ENCODE measurements at regions of chr17 and their contacts with region 1.

Region 1: DNA sequence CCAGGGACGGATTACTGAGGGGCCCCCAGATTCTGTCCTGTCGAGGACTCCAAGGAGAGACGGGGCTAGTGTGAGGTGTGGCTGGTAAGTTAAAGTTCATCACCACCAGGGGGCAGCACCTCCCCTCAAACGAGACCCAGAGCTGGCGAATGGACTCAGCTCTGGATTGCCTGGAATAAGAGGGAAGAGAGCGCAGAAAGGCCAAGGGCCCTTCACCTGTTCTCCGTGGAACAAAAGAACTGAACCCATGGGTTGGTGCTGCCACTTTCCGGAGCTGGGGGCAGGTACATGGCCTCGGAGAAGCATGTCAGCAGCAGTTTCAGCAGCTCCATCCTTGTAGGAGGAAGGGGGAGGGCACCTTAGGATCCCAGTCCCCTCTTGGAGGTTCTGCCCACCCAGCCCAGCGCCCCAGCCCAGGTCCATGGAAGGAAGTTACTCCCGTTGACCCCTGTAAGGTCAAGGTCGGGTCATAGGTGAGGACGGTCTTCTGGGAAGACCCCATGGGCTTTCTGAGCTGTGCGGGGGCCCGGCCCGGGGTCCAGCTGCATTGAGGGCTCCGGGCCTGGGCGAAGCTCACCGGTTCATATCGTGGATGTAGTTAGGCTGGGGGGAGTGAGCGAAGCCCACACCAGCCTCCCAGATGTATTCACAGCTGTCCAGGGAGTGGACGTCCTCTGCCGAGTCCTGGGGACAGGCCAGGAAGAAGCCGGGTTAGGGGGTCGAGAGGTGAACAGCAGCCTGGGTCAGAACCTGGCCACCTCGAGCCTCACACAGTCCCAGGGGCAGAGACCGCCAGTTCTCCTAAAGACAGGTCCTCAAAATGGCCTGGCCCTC is 10.7 kb downstream of the HID1 start:
- DNase-seq: no peak
- H3K4me3 ChIP-seq: no peak overlapping the region
- H3K27ac ChIP-seq: no peak overlapping the region
- H3K4me1 ChIP-seq: peaks cover 3 to 38% (median 9%) of the 10 kb centered on the region in 3 donors
- H3K27me3 ChIP-seq: peaks cover 0 to 8% (median 0%) of the 10 kb centered on the region in 4 donors
- CTCF ChIP-seq: peak; percentile 77 to 91 (median 86)
- POLR2A ChIP-seq: no peak

Region 2: GRCh38 chr17:74798239-74798707 is 163.6 kb before region 1 on chr17:
- intact Hi-C with region 1: loop called (anchors 10 kb)
- DNase-seq: no peak
- H3K4me3 ChIP-seq: no peak overlapping the region
- H3K27ac ChIP-seq: no peak overlapping the region
- H3K4me1 ChIP-seq: no peaks in the 10 kb centered on the region
- H3K27me3 ChIP-seq: no peaks in the 10 kb centered on the region
- CTCF ChIP-seq: no peak
- POLR2A ChIP-seq: no peak

Region 3: DNA sequence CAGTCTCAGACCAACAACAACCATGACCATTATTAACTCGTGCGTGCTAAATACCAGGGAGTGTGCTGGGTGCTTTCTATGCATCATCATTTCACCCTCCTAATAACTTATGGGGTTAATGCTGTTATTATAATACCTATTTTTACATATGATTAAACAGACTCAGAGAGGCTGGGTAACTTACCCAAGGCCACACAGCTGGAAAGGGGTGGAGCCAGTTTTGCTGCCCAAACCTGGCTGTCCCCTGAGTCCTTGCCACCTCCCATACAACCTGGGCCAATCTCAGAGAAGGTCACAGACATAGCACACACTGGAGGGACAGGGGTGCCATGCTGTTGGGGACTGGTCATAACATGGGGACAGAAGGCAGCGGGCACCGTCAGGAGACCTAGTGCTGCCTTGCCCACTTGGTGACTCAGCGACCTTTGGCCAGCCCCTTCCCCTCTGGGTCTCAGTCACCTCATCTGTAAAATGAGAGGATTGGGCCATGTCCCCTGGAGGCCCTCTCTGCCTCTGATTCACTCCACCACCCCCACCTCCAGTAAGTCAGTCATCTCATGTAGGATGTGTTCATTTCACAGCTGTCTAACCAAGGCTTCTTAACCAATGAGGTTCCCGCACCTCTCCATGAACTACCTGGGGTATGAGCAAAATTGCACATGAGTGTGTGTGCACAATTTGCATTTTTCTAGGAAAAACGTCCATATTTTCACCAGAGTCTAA is 57.0 kb before region 1 on chr17:
- intact Hi-C with region 1: no loop called
- DNase-seq: no peak
- H3K4me3 ChIP-seq: no peak overlapping the region
- H3K27ac ChIP-seq: no peak overlapping the region
- H3K4me1 ChIP-seq: peaks cover 6 to 41% (median 15%) of the 10 kb centered on the region in 3 donors
- H3K27me3 ChIP-seq: peaks cover 0 to 44% (median 0%) of the 10 kb centered on the region in 4 donors
- CTCF ChIP-seq: no peak
- POLR2A ChIP-seq: no peak

Region 4: DNA sequence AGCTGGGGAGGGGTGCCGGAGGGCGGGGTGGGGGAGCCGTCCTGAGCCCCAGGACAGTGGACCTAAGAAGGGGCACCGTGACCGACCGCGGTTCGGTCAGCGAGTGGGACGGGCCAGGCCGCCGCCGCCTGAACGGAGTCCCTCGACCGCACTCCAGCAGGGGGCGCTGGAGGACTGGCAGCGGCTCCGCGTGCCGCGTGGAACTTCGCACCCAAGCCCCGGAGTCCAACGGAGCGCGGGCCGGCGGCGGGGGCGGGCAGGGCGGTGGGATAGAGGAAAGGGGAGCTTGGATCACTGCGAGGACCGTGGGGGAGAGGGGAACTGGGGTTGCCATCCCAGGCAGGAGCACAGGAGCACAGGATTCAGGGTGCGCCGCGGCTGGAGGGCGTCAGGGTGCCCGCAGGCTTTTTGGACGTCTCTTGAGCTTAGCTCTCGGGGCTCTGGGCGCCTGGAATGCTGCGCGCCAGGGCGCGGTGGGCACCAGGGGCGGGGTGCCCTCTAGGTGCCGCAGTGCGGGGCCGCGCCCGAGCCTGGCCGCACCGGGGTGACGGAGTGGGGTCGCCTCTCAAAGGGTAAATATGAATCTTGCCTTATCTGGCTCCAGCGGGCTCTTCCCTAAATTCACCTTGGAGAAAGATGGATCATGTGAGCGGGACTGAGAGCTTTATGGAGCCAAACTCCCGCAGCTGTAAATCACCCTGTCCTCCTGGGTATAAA is 38.2 kb before region 1 on chr17:
- intact Hi-C with region 1: loop called (anchors 5 kb)
- DNase-seq: no peak
- H3K4me3 ChIP-seq: peak overlapping the region; percentile 43 to 68 (median 49)
- H3K27ac ChIP-seq: peak overlapping the region in 3 of 4 donors; percentile 8 to 40 (median 39)
- H3K4me1 ChIP-seq: peaks cover 32 to 68% (median 38%) of the 10 kb centered on the region in 3 donors
- H3K27me3 ChIP-seq: peaks cover 0 to 94% (median 19%) of the 10 kb centered on the region in 4 donors
- CTCF ChIP-seq: peak; percentile 63 to 92 (median 80)
- POLR2A ChIP-seq: no peak

Region 5: DNA sequence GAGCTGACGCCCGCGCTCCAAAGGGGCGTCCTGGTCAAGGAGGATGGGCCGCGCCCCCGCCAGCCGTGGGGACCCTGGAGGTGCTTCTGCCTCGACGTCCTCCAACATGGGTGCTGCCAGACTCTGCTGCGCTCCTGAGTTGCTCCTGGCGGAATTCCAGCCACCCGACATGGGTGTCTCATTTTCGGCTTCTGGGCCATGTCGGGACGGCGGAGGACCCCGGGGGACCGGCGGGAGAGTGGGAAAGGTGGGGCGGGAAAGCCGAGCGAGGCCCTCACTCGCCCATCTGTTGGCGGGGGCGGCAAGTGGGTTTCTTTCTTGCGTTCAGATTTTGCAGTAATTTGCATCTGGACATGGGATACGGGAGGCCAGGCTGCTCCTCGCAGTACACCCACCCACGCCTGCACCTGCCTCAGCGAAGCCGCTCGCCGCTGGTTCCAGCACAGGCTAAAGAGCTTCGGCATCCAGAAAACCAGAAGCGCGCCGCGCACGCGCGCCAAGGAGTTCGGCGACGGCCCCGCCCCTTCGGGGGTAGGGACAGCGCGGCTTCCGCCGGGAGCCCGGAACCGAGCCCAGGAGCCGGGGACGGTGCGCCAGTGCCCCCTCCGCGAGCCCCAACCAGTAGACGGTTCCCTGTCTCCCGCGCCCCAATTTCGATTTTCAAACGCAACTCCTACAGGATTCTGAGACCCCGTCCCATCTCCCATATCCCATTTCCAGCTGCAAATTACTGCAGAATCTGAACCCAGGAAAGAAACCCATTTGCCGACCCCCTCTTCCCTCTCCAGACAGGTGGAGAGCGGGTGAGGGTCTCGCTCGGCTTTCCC is 147.7 kb after region 1 on chr17 and contains the start of gene ARMC7:
- intact Hi-C with region 1: loop called (anchors 10 kb)
- DNase-seq: peak; percentile 30
- H3K4me3 ChIP-seq: peak within 1 kb of the TSS; percentile 73 to 91 (median 89)
- H3K27ac ChIP-seq: peak within 1 kb of the TSS; percentile 73 to 92 (median 90)
- H3K4me1 ChIP-seq: peaks cover 18 to 46% (median 25%) of the 10 kb centered on the region in 3 donors
- H3K27me3 ChIP-seq: no peaks in the 10 kb centered on the region
- CTCF ChIP-seq: peak in 1 of 6 experiments; percentile 12
- POLR2A ChIP-seq: peak in 2 of 4 donors; percentile 75 to 79
- total RNA-seq, gene ARMC7: 4.0 to 9.1 (median 5.3) TPM

Region 6: DNA sequence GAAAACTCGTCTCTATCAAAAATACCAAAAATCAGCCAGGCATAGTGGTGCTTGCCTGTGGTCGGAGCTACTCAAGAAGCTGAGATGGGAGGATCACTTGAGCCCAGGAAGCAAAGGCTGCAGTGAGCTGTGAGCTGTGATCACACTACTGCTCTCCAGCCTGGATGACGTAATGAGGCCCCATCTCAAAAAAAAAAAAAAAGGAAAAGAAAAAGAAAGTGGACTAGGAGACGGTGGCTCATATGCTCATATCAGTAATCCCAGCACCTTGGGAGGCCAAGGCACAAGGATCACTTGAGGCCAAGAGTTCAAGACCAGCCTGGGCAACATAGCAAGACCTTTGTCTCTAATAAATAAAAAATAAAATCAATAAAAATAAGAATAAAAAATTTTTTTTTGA is 229.7 kb after region 1 on chr17:
- intact Hi-C with region 1: loop called (anchors 10 kb)
- DNase-seq: no peak
- H3K4me3 ChIP-seq: no peak overlapping the region
- H3K27ac ChIP-seq: no peak overlapping the region
- H3K4me1 ChIP-seq: peaks cover 0 to 6% (median 0%) of the 10 kb centered on the region in 3 donors
- H3K27me3 ChIP-seq: no peaks in the 10 kb centered on the region
- CTCF ChIP-seq: no peak
- POLR2A ChIP-seq: no peak